ENCODE measurements at regions of chr5 and their contacts with region 1.

Region 1: DNA sequence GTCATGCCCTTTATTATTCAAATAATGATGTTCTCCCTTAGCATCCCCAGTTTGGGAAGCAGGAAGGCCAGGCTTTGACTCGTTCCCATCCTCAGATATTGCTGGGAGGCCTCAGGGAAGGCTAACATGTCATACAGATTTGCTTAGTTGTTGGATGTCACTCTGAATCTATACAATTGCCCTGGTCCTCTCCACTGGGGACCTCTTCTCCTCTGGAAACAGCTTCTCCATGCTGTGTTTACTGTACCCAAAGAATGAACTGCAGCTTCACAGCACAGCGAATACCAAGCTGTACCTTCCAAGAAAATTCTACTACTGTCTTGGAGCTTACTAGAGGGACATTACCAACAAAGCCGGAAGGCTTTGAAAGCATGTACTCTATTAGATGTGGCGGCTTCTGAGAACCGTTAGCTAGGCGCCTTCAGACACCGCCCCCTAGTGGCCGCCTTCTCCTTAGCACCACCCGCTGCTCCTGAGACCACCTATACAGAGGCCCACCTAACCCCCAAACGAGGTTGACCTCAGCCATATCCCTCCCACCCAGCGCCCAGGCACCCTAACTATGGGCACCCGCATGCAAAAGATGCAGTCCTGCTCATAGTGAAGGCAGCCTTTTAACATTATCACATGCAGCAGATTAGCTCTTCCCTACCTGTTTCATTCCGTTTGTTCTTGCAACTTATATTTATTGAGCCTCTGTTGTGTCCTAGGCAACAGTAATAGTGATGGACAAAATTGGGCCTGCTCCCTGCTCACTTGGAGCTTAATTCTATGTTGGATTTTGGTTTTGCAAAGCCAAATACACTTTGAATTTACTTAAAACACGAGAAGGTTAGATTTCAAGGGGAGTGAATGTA is 34.9 kb upstream of the FOXI1 start:
- DNase-seq: peak; percentile 43
- H3K4me3 ChIP-seq: no peak overlapping the region; a peak in 1 of 4 replicates
- H3K27ac ChIP-seq: no peak overlapping the region
- H3K4me1 ChIP-seq: no peaks in the 10 kb centered on the region
- H3K27me3 ChIP-seq: no peaks in the 10 kb centered on the region
- CTCF ChIP-seq: peak; percentile 54
- EP300 ChIP-seq: no peak
- RAD21 ChIP-seq: peak; percentile 37; the same call in 1 of the 2 replicates

Region 2: DNA sequence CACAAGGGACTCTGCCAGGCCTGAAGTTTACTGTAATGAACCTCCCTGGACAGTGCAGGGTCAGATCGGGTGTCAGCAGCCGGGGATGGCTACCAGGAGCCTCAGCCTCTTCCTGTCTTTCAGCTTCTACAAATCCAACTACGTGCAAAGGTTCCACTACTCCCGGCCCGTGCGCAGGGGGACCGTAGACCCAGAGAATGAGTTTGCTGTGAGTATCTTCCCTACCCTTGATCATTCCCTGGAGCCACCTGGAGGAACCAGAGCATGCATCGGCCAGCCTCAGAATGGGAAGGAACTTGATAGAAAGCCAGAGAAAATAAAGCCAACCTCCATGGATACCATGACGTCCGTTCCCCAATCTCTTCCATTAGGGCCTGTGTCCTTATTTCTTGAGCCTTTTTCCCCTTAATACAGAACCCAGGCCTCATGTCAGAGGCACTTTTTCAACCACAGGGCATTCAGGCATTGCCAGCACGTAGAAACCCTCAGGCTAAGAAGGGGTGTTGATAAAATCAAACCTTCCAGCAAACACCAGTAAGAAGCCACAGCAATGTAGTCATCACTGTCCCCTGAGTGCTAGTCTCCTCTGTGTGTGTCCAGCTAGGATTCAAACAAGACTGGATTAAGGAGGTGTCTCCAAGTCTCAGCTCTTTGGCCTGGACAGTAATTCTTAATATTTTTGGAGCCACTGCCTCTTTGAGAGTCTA is 14.1 kb before region 1 on chr5:
- CTCF ChIA-PET with region 1: interaction called, 13 read pairs
- POLR2A ChIA-PET with region 1: no interaction called
- DNase-seq: no peak
- H3K4me3 ChIP-seq: no peak overlapping the region
- H3K27ac ChIP-seq: no peak overlapping the region
- H3K4me1 ChIP-seq: peaks cover 0 to 6% of the 10 kb centered on the region in 2 experiments; a peak in 1 of 4 replicates
- H3K27me3 ChIP-seq: no peaks in the 10 kb centered on the region
- CTCF ChIP-seq: no peak
- EP300 ChIP-seq: no peak
- RAD21 ChIP-seq: no peak